ENCODE measurements at regions of chr7 and their contacts with region 1.

Region 1: GRCh38 chr7:30396389-30396788 is 82.2 kb downstream of the NOD1 start:
- DNase-seq: no peak
- H3K4me3 ChIP-seq: no peak overlapping the region
- H3K4me3 Mint-ChIP-seq: no peak overlapping the region
- H3K27ac Mint-ChIP-seq: no peak overlapping the region
- H3K4me1 ChIP-seq: no peaks in the 10 kb centered on the region
- H3K4me1 Mint-ChIP-seq: no peaks in the 10 kb centered on the region
- H3K27me3 ChIP-seq: no peaks in the 10 kb centered on the region
- H3K27me3 Mint-ChIP-seq: no peaks in the 10 kb centered on the region
- CTCF ChIP-seq: peak in 1 of 2 experiments; percentile 20

Region 2: DNA sequence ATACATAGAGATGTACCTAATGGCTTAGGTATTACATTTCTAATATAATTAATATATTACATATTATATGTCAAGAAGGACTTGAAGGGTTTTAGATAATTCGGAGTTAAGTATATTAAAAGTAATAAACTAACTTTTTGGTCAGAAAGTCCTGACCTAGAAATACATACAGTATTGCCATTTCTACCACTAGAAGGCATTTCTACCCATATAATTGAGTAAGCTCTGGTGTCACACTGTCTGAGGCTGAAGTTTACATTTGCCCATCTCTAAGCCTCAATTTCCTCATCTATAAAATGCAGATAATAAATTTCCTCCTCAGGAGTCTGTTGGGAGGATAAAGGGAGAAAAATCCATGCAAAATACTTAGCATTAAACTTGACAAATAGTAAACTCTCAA is 377.0 kb before region 1 on chr7:
- CTCF ChIA-PET with region 1: no interaction called
- POLR2A ChIA-PET with region 1: no interaction called
- intact Hi-C with region 1: no loop called
- DNase-seq: no peak
- H3K4me3 ChIP-seq: no peak overlapping the region
- H3K4me3 Mint-ChIP-seq: no peak overlapping the region
- H3K27ac Mint-ChIP-seq: no peak overlapping the region
- H3K4me1 ChIP-seq: no peaks in the 10 kb centered on the region
- H3K4me1 Mint-ChIP-seq: no peaks in the 10 kb centered on the region
- H3K27me3 ChIP-seq: no peaks in the 10 kb centered on the region
- H3K27me3 Mint-ChIP-seq: no peaks in the 10 kb centered on the region
- CTCF ChIP-seq: peak in 1 of 2 experiments; percentile 21

Region 3: GRCh38 chr7:30369879-30370278 is 26.5 kb before region 1 on chr7:
- CTCF ChIA-PET with region 1: no interaction called
- POLR2A ChIA-PET with region 1: no interaction called
- intact Hi-C with region 1: no loop called
- DNase-seq: no peak
- H3K4me3 ChIP-seq: no peak overlapping the region
- H3K4me3 Mint-ChIP-seq: no peak overlapping the region
- H3K27ac Mint-ChIP-seq: no peak overlapping the region
- H3K4me1 ChIP-seq: no peaks in the 10 kb centered on the region
- H3K4me1 Mint-ChIP-seq: no peaks in the 10 kb centered on the region
- H3K27me3 ChIP-seq: no peaks in the 10 kb centered on the region
- H3K27me3 Mint-ChIP-seq: no peaks in the 10 kb centered on the region
- CTCF ChIP-seq: no peak

Region 4: DNA sequence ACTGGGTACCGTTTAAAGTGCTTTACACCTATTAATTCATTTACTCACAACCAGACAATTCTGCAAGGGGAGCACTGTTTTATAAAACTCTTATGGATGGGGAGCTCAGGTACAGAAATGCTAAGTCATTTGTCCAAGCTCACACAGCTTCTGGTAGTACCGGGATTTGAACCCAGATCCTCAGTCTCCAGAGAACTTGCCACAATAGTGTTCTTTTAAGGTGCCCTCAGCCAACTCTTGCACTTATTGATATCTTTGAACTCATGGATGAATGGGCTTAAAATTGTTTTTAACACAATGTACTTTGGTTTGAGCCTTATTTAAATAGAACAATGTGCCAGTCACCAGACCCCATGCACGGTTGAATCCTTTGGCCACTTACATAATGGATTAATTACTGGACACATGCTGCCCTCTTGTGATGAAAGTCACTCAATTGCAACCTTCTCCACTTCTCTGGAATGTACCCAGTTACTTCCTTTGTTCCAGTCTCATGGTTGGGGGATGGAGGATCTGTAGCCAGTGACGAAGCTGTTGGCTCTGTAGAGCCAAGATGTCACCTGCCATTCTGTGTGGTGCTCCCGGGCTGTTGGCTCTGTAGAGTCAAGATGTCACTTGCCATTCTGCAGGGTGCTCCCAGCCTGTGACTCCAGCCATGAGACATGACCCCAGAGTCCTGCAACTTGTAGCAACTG is 16.6 kb after region 1 on chr7:
- CTCF ChIA-PET with region 1: no interaction called
- POLR2A ChIA-PET with region 1: no interaction called
- intact Hi-C with region 1: no loop called
- DNase-seq: peak in 1 of 2 experiments; percentile 46
- H3K4me3 ChIP-seq: no peak overlapping the region
- H3K4me3 Mint-ChIP-seq: no peak overlapping the region
- H3K27ac Mint-ChIP-seq: no peak overlapping the region
- H3K4me1 ChIP-seq: no peaks in the 10 kb centered on the region
- H3K4me1 Mint-ChIP-seq: no peaks in the 10 kb centered on the region
- H3K27me3 ChIP-seq: no peaks in the 10 kb centered on the region
- H3K27me3 Mint-ChIP-seq: no peaks in the 10 kb centered on the region
- CTCF ChIP-seq: no peak

Region 5: DNA sequence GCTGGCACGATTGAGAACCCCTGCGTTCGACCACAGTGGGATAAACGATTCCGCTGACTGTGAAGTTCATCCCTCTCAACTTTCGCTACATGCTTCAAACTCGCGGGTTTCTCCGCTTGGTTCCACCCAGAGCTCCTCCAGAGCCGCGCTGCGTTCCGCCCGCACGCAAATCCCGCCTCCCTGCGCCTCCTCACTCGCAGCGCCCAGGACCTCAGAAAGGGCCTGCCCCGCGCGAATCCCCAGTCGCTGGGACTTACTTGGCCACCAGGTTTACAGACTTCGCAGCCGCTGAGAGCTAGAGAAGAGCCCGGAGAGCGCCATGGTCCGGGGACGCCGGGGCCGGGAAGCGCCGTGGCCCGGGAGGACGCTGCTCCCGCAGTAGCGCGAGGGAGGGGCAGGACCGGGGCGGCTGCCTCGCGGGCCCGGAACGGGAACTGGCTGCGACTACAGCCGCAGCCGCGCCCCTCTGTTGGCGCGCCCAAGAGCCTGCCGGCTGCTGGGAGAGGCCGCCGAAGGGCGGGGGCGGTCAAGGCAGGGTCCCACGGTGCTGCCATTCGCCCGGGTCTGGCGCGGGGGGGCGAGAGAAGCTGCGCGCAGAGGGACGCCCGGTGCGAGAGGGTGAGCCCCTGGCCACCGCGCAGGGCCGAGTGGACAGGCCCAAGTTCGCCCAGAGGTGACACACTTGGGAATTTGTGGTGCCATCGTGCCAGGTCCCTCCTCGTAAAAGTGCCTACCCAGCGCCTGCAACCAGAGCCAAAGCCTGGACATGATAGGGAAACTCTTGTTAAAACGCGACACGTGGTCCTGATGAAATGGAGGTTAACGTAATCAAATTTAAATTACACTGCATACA is 82.2 kb after region 1 on chr7 and contains the start of gene NOD1:
- CTCF ChIA-PET with region 1: no interaction called
- POLR2A ChIA-PET with region 1: no interaction called
- intact Hi-C with region 1: loop called (anchors 10 kb)
- DNase-seq: peak; percentile 72 to 84
- H3K4me3 ChIP-seq: peak within 1 kb of the TSS; percentile 61
- H3K4me3 Mint-ChIP-seq: peak within 1 kb of the TSS; percentile 82
- H3K27ac Mint-ChIP-seq: peak within 1 kb of the TSS; percentile 55
- H3K4me1 ChIP-seq: 0 out of 2 replicates have a peak, but pooled peaks cover 10% of the 10 kb centered on the region
- H3K4me1 Mint-ChIP-seq: peaks cover 10% of the 10 kb centered on the region
- H3K27me3 ChIP-seq: no peaks in the 10 kb centered on the region
- H3K27me3 Mint-ChIP-seq: no peaks in the 10 kb centered on the region
- CTCF ChIP-seq: peak in 1 of 2 experiments; percentile 1
- total RNA-seq, gene NOD1: 5.4 and 7.0 TPM in 2 replicates

Region 6: DNA sequence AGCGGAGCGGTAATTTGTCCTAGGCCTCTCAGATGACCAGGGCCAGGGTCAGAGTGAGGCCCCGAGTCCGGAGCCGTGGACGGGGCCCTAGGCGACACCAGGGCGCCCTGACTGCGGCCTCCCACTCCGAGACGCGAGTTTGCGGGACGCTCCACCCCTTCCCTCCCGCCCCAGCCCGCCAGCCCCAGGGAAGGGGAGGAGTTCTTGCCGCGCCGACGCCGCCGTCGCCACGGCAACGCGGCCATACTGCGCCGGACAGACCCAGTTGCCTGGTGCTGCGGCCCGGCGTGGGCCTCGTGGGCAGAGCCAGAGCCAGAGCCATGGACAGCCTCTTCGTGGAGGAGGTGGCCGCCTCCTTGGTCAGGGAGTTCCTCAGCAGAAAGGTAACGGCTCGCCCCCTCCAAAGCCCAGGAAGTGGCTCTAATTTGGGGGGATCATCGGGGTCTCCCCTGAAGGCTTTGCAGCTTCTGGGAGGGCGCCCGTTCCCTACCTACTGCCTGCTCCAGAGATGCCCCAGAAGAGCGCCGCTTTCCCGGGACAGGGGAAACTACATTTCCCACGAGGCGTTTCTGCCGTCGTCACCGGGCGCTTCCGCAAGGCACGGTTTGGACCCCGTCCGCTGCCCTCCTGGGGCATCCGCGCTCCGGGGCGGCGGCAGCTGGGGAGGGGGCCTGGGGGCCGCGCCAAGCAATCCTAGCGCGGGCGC is 374.9 kb after region 1 on chr7 and contains the start of gene MINDY4:
- CTCF ChIA-PET with region 1: no interaction called
- POLR2A ChIA-PET with region 1: no interaction called
- intact Hi-C with region 1: loop called (anchors 10 kb)
- DNase-seq: peak; percentile 73 to 77
- H3K4me3 ChIP-seq: peak within 1 kb of the TSS; percentile 67
- H3K4me3 Mint-ChIP-seq: peak within 1 kb of the TSS; percentile 78
- H3K27ac Mint-ChIP-seq: peak within 1 kb of the TSS; percentile 49
- H3K4me1 ChIP-seq: peaks cover 6% of the 10 kb centered on the region
- H3K4me1 Mint-ChIP-seq: peaks cover 6% of the 10 kb centered on the region
- H3K27me3 ChIP-seq: no peaks in the 10 kb centered on the region
- H3K27me3 Mint-ChIP-seq: no peaks in the 10 kb centered on the region
- CTCF ChIP-seq: no peak
- total RNA-seq, gene MINDY4: 2.0 and 2.1 TPM in 2 replicates

Measured in Caco-2 (cell line).